Posterior vena cava (tissue), 2 donors: ENCODE measurements at regions of chr15 and their contacts with region 1.

Region 1: GRCh38 chr15:60585743-60586708 is 107.1 kb upstream of the ICE2 start:
- DNase-seq: no peak

Region 2: DNA sequence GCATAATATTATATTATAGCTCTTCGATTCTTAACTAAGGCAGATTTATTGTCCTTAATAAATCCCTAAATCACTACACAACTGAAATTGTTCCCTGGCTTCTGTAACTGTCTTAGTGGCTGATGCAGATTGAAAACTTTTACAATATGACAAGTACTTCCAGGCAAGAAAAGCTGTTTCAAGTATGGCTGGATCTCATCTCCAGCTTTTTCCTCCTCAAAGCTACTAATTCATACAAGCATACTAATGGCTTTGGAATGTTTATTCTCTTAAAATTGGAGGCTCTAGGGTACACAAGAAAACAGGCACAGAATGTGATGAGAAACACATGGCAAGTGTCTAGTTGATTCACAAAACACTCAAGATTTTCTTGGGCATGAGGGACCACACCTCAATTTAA is 244.5 kb after region 1 on chr15:
- intact Hi-C with region 1: no loop called
- DNase-seq: no peak

Region 3: DNA sequence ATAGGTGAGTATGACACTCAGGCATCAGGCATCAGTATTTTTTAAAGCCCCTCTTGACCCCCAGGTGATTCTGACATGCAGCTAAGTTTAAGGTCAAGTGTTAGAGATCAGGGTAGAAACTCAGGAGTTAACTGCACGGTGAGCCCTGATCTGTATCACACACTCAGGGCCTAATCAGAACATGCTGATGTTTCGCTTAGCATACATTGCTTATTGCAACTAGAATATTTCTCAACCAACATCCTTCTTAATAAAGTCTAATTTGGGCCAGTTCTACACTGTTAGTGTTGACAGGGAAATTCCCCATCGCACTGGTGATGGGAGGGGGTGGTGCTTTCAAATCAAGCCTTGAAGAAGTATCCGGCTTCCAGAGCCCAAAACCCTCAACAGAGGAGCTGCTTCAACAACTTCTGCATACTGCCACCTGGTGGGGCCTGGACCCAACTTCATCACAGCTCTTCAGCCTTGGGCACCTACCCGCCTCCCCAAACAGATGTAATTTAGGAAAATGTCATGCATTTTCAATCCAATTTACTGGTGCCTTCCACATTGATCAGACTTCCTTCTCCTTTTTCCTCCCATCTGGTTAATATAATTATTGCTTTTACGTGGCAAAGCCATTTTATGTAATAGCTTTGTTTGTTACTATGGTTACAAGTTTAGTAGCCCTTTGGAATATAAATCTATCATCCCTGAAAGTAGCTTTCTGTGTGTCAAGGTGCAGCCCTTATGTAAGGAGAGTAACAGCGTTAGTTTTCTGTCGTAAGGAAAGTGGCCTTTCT is 330.8 kb after region 1 on chr15:
- intact Hi-C with region 1: loop called (anchors 5 to 10 kb)
- DNase-seq: peak; percentile 92